ENCODE measurements at regions of chr16 and their contacts with region 1.

Region 1: DNA sequence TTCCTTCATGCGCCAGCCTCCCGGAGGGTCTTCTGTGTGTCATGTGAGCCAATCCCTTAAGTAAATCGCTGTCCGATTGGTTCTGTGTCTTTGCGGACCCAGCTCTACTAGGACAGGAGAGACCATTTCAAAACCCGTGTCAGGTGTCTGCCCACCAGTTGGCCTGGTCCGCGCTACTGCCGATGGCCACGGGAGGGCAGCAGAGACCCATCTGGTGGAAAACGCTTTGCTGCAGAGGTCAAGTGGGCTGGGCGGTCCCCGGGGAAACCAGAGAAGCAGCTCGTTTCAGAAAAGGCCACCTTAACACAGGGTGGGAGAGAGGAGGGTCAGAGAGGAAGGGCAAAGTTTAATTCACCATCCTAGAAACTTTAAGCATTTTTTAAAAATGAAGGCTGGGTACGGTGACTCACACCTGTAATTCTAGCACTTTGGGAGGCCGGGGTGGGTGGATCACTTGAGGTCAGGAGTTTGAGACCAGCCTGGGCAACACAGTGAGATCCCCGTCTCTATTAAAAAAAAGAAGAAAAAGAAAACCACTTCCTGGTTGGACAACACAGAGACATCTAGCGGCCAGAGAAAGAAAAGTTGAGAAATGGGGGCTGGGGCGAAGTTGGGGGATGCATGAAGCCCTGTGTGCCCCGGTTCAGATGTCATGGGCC is 2.8 kb upstream of the CIBAR2 start:
- DNase-seq: peak; percentile 85
- ATAC-seq: peak; percentile 89
- H3K4me3 ChIP-seq: peak overlapping the region; percentile 23 to 27
- H3K27ac ChIP-seq: peak overlapping the region; percentile 48
- H3K4me1 ChIP-seq: peaks cover 11 to 24% of the 10 kb centered on the region in 2 experiments; a peak in 3 of 4 replicates
- H3K27me3 ChIP-seq: no peaks in the 10 kb centered on the region
- CTCF ChIP-seq: peak; percentile 98 to 100 (median 100)
- POLR2A ChIP-seq: no peak
- RAD21 ChIP-seq: peak; percentile 100

Region 2: DNA sequence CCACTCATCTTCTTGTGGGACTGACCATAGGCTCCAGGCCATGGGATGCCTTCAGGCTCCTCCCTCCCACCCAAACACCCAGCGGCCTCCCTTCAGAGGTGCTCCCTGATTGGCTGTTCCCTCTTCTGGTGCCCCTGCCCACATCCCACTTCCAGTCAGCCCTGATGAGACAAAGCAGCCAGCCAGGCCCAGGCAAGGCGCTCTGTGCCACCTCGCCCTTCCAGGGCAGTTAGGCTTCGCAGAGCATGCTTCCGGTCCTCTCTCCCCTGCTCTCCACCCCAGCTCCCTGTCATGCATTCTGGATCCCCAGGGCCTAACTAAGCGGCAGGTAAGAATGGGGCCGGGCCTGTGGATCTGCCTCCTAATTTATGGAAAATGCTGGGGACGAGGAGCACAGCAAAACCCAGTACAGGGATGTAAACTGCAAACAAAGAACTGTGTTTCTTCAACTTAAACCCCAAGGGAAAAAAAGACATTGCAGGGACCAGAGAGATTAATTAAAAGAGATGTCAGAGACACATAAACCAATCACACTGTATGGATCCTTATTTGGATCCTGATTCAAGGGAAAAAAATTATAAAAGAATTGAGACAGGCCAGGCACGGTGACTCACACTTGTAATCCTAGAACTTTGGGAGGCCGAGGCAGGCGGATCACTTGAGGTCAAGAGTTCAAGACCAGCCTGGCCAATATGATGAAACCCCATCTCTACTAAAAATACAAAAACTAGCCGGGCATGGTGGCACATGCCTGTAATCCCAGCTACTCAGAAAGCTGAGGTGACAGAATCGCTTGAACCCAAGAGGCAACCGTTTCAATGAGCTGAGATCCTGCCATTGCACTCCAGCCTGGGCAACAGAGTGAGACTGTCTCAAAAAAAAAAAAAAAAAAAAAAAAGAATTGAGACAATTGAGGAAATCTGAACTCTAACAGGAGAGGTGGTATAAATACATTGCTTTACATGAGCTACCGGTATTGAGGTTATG is 129.7 kb before region 1 on chr16:
- CTCF ChIA-PET with region 1: no interaction called
- POLR2A ChIA-PET with region 1: no interaction called
- RAD21 ChIA-PET with region 1: no interaction called
- intact Hi-C with region 1: no loop called
- DNase-seq: no peak
- ATAC-seq: peak; percentile 65
- H3K4me3 ChIP-seq: peak overlapping the region in 1 of 2 experiments; percentile 21; a peak in 1 of 4 replicates
- H3K27ac ChIP-seq: peak overlapping the region; percentile 68
- H3K4me1 ChIP-seq: peaks cover 22 to 30% of the 10 kb centered on the region in 2 experiments
- H3K27me3 ChIP-seq: no peaks in the 10 kb centered on the region
- CTCF ChIP-seq: no peak
- POLR2A ChIP-seq: no peak
- RAD21 ChIP-seq: no peak

Region 3: GRCh38 chr16:85126705-85127419 is 11.8 kb after region 1 on chr16:
- CTCF ChIA-PET with region 1: interaction called, 33 read pairs
- POLR2A ChIA-PET with region 1: no interaction called
- RAD21 ChIA-PET with region 1: interaction called in 1 of 2 experiments, 4 read pairs
- intact Hi-C with region 1: no loop called
- DNase-seq: no peak
- ATAC-seq: no peak
- H3K4me3 ChIP-seq: no peak overlapping the region
- H3K27ac ChIP-seq: no peak overlapping the region
- H3K4me1 ChIP-seq: peaks cover 17 to 35% of the 10 kb centered on the region in 2 experiments
- H3K27me3 ChIP-seq: no peaks in the 10 kb centered on the region
- CTCF ChIP-seq: no peak
- POLR2A ChIP-seq: no peak
- RAD21 ChIP-seq: no peak

Region 4: GRCh38 chr16:85187002-85187401 is 72.0 kb after region 1 on chr16:
- CTCF ChIA-PET with region 1: no interaction called
- POLR2A ChIA-PET with region 1: no interaction called
- RAD21 ChIA-PET with region 1: no interaction called
- intact Hi-C with region 1: no loop called
- DNase-seq: no peak
- ATAC-seq: no peak
- H3K4me3 ChIP-seq: no peak overlapping the region
- H3K27ac ChIP-seq: no peak overlapping the region
- H3K4me1 ChIP-seq: peaks cover 0 to 6% of the 10 kb centered on the region in 2 experiments; a peak in 1 of 4 replicates
- H3K27me3 ChIP-seq: no peaks in the 10 kb centered on the region
- CTCF ChIP-seq: no peak
- POLR2A ChIP-seq: no peak
- RAD21 ChIP-seq: no peak

Region 5: GRCh38 chr16:85275533-85276249 is 160.7 kb after region 1 on chr16:
- CTCF ChIA-PET with region 1: interaction called, 12 read pairs
- POLR2A ChIA-PET with region 1: no interaction called
- RAD21 ChIA-PET with region 1: no interaction called
- intact Hi-C with region 1: no loop called
- DNase-seq: peak; percentile 19
- ATAC-seq: peak; percentile 96
- H3K4me3 ChIP-seq: no peak overlapping the region
- H3K27ac ChIP-seq: no peak overlapping the region
- H3K4me1 ChIP-seq: no peaks in the 10 kb centered on the region
- H3K27me3 ChIP-seq: no peaks in the 10 kb centered on the region
- CTCF ChIP-seq: peak; percentile 91 to 100 (median 99)
- POLR2A ChIP-seq: no peak
- RAD21 ChIP-seq: peak; percentile 96

Region 6: GRCh38 chr16:85330694-85331188 is 215.7 kb after region 1 on chr16:
- CTCF ChIA-PET with region 1: interaction called, 12 read pairs
- POLR2A ChIA-PET with region 1: no interaction called
- RAD21 ChIA-PET with region 1: interaction called in 1 of 2 experiments, 4 read pairs
- intact Hi-C with region 1: no loop called
- DNase-seq: peak; percentile 86
- ATAC-seq: peak; percentile 70
- H3K4me3 ChIP-seq: no peak overlapping the region
- H3K27ac ChIP-seq: peak overlapping the region; percentile 50
- H3K4me1 ChIP-seq: peaks cover 67 to 74% of the 10 kb centered on the region in 2 experiments
- H3K27me3 ChIP-seq: no peaks in the 10 kb centered on the region
- CTCF ChIP-seq: peak in 2 of 3 experiments; percentile 62 to 75; a peak in 4 of 6 replicates
- POLR2A ChIP-seq: no peak
- RAD21 ChIP-seq: no peak

Region 7: DNA sequence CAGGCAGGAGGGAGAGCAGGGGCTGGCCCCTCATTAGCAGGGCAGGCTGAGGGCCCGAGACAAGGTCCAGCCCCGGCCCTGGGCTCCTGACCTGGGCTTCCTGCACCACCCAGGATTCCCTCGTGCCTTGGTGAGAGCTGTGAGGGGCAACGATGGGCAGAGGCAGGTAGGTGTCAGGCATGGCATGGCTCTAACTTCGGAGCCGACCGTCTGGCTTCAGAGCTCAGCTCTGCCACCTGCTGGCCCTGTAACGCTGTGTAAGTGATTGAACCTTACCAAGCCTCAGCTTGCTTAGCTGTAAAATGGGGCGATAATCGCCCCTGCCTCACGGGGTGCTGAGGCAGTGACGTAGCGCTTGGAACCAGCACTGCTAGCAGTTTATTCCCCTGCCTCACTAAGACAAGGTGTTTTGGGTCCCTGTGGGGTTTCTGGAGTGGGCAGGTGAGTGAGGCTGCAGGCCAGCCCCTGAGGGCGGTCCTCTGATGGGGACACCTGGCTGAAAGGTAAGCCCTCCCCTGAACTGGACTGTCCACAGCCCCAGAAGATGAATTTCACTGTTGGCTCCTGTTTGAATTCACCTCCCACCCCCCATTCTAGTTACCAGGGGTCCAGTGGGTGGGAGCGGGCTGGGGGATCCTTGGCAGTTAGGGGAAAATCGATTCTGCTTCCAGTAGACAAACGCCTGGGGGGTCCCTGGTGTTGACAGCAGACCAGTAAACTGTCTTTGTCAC is 313.3 kb after region 1 on chr16:
- CTCF ChIA-PET with region 1: interaction called, 14 read pairs
- POLR2A ChIA-PET with region 1: no interaction called
- RAD21 ChIA-PET with region 1: interaction called in 1 of 2 experiments, 5 read pairs
- intact Hi-C with region 1: loop called (anchors 2 kb)
- DNase-seq: peak; percentile 38
- ATAC-seq: peak; percentile 91
- H3K4me3 ChIP-seq: no peak overlapping the region
- H3K27ac ChIP-seq: no peak overlapping the region
- H3K4me1 ChIP-seq: no peaks in the 10 kb centered on the region
- H3K27me3 ChIP-seq: 0 out of 2 replicates have a peak, but pooled peaks cover 5% of the 10 kb centered on the region
- CTCF ChIP-seq: peak; percentile 76 to 93 (median 81)
- POLR2A ChIP-seq: no peak
- RAD21 ChIP-seq: peak; percentile 80